ENCODE measurements at regions of chr9 and their contacts with region 1.

Region 1: GRCh38 chr9:83707768-83708514 is at the start of gene UBQLN1:
- DNase-seq: peak; percentile 94
- ATAC-seq: peak; percentile 86
- H3K4me3 Mint-ChIP-seq: peak within 1 kb of the TSS; percentile 90
- H3K27ac Mint-ChIP-seq: peak within 1 kb of the TSS; percentile 100
- H3K4me1 Mint-ChIP-seq: peaks cover 30% of the 10 kb centered on the region
- H3K27me3 Mint-ChIP-seq: no peaks in the 10 kb centered on the region
- total RNA-seq, gene UBQLN1: 87.9 to 108 TPM

Region 2: GRCh38 chr9:83665580-83666200 is 42.3 kb before region 1 on chr9:
- POLR2A ChIA-PET with region 1: interaction called, 14 read pairs
- DNase-seq: no peak
- ATAC-seq: no peak
- H3K4me3 Mint-ChIP-seq: no peak overlapping the region
- H3K27ac Mint-ChIP-seq: peak overlapping the region; percentile 50
- H3K4me1 Mint-ChIP-seq: peaks cover 19% of the 10 kb centered on the region
- H3K27me3 Mint-ChIP-seq: no peaks in the 10 kb centered on the region

Region 3: DNA sequence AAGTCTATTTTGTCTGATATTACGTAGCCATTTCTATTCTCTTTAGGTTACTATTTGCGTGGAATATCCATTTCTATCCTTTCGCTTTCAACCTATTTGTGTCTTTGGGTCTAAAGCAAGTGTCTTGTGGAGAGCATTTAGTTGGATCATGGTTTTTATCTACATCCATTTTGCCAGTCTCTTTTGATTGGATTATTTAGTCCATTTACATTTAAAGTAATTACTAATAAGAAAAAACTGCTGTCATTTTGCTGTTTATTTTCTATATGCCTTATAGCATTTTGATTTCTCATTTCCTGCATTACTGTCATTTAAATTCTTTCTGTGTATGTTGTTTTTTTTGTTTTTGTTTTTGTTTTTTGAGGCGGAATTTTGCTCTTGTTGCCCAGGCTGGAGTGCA is 25.8 kb after region 1 on chr9:
- POLR2A ChIA-PET with region 1: no interaction called
- DNase-seq: no peak
- ATAC-seq: no peak
- H3K4me3 Mint-ChIP-seq: no peak overlapping the region
- H3K27ac Mint-ChIP-seq: no peak overlapping the region
- H3K4me1 Mint-ChIP-seq: peaks cover 3% of the 10 kb centered on the region
- H3K27me3 Mint-ChIP-seq: no peaks in the 10 kb centered on the region

Region 4: DNA sequence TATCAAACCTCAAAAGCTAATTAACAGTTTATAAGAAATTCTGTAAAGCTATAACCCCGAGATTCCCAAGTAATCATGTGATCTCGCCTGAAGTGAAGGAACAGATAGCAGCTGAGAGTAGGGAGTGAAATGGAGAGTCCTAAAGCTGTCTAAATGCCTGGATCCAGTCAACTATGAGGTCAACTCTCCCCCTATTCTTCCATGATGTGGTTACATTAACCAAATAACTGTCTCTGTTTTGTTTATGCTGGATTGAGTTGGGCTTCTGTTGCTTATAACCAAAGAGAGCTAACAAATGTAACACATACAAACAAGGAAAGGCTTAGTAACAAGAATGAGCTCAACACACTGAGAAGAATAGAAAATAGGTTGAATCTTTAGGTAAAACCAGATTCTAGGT is 68.0 kb after region 1 on chr9:
- POLR2A ChIA-PET with region 1: no interaction called
- DNase-seq: no peak
- ATAC-seq: no peak
- H3K4me3 Mint-ChIP-seq: no peak overlapping the region
- H3K27ac Mint-ChIP-seq: no peak overlapping the region
- H3K4me1 Mint-ChIP-seq: no peaks in the 10 kb centered on the region
- H3K27me3 Mint-ChIP-seq: no peaks in the 10 kb centered on the region

Measured in activated naive CD8-positive, alpha-beta T cell treated with anti-CD3 and anti-CD28 coated beads, Interleukin-2, amount 10 ng/mL, durations not matched to agents 7 days and 5 days (primary cell).